ENCODE measurements at regions of chr10 and their contacts with region 1.

Region 1: GRCh38 chr10:48363617-48364355 is 57.3 kb downstream of the MAPK8 start:
- DNase-seq: peak; percentile 11
- H3K4me3 ChIP-seq: no peak overlapping the region
- H3K27ac ChIP-seq: no peak overlapping the region
- H3K4me1 ChIP-seq: peaks cover 0 to 24% (median 12%) of the 10 kb centered on the region in 4 donors
- H3K27me3 ChIP-seq: no peaks in the 10 kb centered on the region
- CTCF ChIP-seq: peak; percentile 46 to 66 (median 54)
- EP300 ChIP-seq: no peak
- POLR2A ChIP-seq: no peak

Region 2: DNA sequence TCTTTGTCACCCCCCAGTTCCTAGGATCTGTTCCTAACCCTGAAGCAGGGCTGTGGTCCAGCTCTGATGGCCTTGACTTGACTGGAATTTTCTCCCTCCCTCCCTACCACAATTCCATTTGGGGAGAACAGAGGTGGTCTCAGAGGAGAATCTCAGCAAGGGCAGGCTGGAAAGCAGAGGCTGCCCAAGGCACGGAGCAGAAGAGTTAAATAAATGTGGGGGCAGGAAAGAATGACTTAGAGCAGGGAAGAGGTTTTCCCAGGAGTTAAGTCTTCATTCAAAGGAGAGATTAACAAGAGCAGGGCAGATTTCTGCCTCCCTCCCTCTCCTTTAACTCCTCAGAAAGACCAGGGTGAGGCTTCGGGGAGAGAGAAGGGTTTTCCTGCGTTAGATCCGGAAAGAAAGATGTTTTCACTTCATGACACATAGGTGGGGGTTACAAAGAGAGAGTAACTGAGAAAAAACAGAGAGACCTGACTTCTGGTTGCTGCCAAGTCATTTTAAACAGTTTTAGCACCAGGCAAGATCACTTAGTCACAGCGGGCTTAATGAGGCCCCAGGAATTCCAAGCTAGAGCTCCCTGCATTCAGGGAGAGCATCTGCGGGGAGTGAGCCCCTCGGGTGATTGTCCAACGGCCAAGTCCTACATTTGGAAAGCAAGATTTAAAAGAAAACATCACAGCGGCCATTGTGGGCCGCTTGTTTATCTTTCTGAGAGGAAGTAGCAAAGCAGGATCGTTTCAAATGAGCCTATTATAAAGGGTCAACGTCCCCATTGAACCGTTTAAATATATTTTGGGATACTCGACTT is 162.4 kb after region 1 on chr10:
- in situ Hi-C with region 1: loop called in 1 of 4 experiments (anchors 25 kb)
- intact Hi-C with region 1: no loop called
- DNase-seq: no peak
- H3K4me3 ChIP-seq: no peak overlapping the region
- H3K27ac ChIP-seq: peak overlapping the region; percentile 20 to 47 (median 43)
- H3K4me1 ChIP-seq: peaks cover 0 to 20% (median 10%) of the 10 kb centered on the region in 4 donors
- H3K27me3 ChIP-seq: peaks cover 37% of the 10 kb centered on the region
- CTCF ChIP-seq: no peak
- EP300 ChIP-seq: no peak
- POLR2A ChIP-seq: no peak

Region 3: GRCh38 chr10:48634198-48634983 is 270.6 kb after region 1 on chr10:
- in situ Hi-C with region 1: loop called in 1 of 4 experiments (anchors 25 kb)
- intact Hi-C with region 1: no loop called
- DNase-seq: peak; percentile 56
- H3K4me3 ChIP-seq: no peak overlapping the region
- H3K27ac ChIP-seq: peak overlapping the region; percentile 12 to 34 (median 32)
- H3K4me1 ChIP-seq: peaks cover 5 to 28% (median 10%) of the 10 kb centered on the region in 4 donors
- H3K27me3 ChIP-seq: no peaks in the 10 kb centered on the region
- CTCF ChIP-seq: no peak
- EP300 ChIP-seq: no peak
- POLR2A ChIP-seq: no peak

Region 4: GRCh38 chr10:48701139-48701901 is 337.5 kb after region 1 on chr10:
- in situ Hi-C with region 1: no loop called
- intact Hi-C with region 1: no loop called
- DNase-seq: peak; percentile 63
- H3K4me3 ChIP-seq: no peak overlapping the region
- H3K27ac ChIP-seq: no peak overlapping the region
- H3K4me1 ChIP-seq: peaks cover 0 to 26% (median 10%) of the 10 kb centered on the region in 4 donors
- H3K27me3 ChIP-seq: no peaks in the 10 kb centered on the region
- CTCF ChIP-seq: no peak
- EP300 ChIP-seq: no peak
- POLR2A ChIP-seq: no peak

Measured in transverse colon (tissue), 4 donors.